ENCODE measurements at regions of chr17 and their contacts with region 1.

Region 1: GRCh38 chr17:2054512-2055291 is at the start of gene HIC1:
- DNase-seq: peak; percentile 53
- H3K4me3 Mint-ChIP-seq: peak within 1 kb of the TSS; percentile 48
- H3K27ac Mint-ChIP-seq: no peak within 1 kb of the TSS
- H3K4me1 Mint-ChIP-seq: peaks cover 12% of the 10 kb centered on the region
- H3K27me3 Mint-ChIP-seq: no peaks in the 10 kb centered on the region
- CTCF ChIP-seq: peak; percentile 93
- total RNA-seq, gene HIC1: 0.59 and 1.0 TPM in 2 replicates

Region 2: DNA sequence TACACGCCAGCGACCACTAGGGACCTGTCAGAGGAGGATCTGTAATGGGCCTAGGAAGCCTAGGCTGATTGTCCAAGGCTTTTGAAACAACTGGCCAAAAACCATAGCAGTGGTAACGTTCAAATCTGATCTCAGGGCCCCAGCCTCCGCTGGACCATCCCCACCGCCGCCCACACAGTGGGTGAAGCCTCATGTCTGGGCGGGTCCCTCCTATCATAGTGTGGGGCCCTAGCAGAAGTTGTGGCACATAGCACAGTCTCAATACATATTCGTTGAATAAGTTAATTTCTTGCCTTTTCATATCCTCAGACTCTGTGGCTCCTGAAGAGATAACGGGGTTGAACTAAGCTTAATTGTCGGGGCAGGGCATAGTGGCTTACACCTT is 23.9 kb before region 1 on chr17:
- CTCF ChIA-PET with region 1: no interaction called
- POLR2A ChIA-PET with region 1: no interaction called
- intact Hi-C with region 1: no loop called
- DNase-seq: no peak
- H3K4me3 Mint-ChIP-seq: peak overlapping the region; percentile 86
- H3K27ac Mint-ChIP-seq: peak overlapping the region; percentile 74
- H3K4me1 Mint-ChIP-seq: peaks cover 5% of the 10 kb centered on the region
- H3K27me3 Mint-ChIP-seq: no peaks in the 10 kb centered on the region
- CTCF ChIP-seq: peak; percentile 22

Region 3: DNA sequence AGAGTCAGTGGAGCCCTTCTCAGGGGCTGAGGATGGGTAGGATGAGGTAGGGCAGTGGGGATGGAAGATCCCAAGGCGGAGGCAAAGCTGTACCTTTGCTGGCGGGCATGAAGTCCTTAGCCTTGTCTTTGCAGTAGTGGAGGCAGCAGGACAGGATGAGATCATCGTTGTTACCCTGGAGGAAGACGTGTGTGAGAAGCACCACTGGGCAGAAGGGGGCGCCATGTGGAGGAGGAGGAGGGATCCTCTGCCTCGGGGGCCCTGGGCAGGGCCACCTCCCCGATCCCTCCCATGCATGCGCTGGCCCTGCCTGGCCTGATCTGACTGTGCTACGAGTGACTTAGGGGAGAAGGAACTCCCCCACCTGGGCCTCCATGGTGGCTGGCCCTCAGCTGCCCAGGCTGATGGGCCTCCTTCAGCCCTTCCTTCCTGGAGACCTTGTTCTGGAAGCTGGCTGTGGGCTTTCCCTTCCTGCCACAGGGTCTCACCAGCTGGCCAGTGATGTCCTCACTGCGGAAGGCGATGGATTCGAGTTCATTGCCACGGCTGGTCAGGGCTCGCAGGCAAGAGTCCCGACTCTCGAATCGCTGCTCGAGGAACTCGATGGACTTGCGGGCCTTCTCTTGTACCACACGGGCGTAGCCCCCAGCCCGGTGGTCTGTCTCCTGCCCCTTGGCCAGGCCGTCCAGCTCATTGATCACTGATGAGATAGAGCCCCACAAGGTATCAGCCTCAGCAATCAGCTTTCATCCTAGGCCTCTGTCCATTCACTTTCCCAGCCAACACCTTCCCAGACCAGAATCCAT is 10.5 kb after region 1 on chr17:
- CTCF ChIA-PET with region 1: interaction called, 13 read pairs
- POLR2A ChIA-PET with region 1: no interaction called
- intact Hi-C with region 1: no loop called
- DNase-seq: peak; percentile 46
- H3K4me3 Mint-ChIP-seq: no peak overlapping the region
- H3K27ac Mint-ChIP-seq: peak overlapping the region; percentile 61
- H3K4me1 Mint-ChIP-seq: no peaks in the 10 kb centered on the region
- H3K27me3 Mint-ChIP-seq: no peaks in the 10 kb centered on the region
- CTCF ChIP-seq: peak; percentile 23

Region 4: GRCh38 chr17:2230877-2231276 is 176.2 kb after region 1 on chr17:
- CTCF ChIA-PET with region 1: interaction called, 4 read pairs
- POLR2A ChIA-PET with region 1: no interaction called
- intact Hi-C with region 1: loop called (anchors 1 kb)
- DNase-seq: no peak
- H3K4me3 Mint-ChIP-seq: no peak overlapping the region
- H3K27ac Mint-ChIP-seq: no peak overlapping the region
- H3K4me1 Mint-ChIP-seq: peaks cover 6% of the 10 kb centered on the region
- H3K27me3 Mint-ChIP-seq: no peaks in the 10 kb centered on the region
- CTCF ChIP-seq: no peak

Measured in MCF 10A (cell line).